Left ventricle myocardium inferior (tissue), 1 donor: ENCODE measurements at regions of chr17 and their contacts with region 1.

Region 1: GRCh38 chr17:2094891-2095535 is 40.1 kb downstream of the HIC1 start:
- DNase-seq: peak; percentile 75
- H3K4me3 ChIP-seq: peak overlapping the region; percentile 7
- H3K27ac ChIP-seq: peak overlapping the region; percentile 93
- H3K4me1 ChIP-seq: peaks cover 59% of the 10 kb centered on the region
- H3K27me3 ChIP-seq: no peaks in the 10 kb centered on the region
- CTCF ChIP-seq: peak; percentile 87

Region 2: GRCh38 chr17:2172077-2172851 is 77.3 kb after region 1 on chr17:
- intact Hi-C with region 1: loop called (anchors 10 kb)
- DNase-seq: peak; percentile 84
- H3K4me3 ChIP-seq: peak overlapping the region; percentile 42
- H3K27ac ChIP-seq: peak overlapping the region; percentile 90
- H3K4me1 ChIP-seq: peaks cover 80% of the 10 kb centered on the region
- H3K27me3 ChIP-seq: no peaks in the 10 kb centered on the region
- CTCF ChIP-seq: no peak